ENCODE measurements at regions of chr16 and their contacts with region 1.

Region 1: DNA sequence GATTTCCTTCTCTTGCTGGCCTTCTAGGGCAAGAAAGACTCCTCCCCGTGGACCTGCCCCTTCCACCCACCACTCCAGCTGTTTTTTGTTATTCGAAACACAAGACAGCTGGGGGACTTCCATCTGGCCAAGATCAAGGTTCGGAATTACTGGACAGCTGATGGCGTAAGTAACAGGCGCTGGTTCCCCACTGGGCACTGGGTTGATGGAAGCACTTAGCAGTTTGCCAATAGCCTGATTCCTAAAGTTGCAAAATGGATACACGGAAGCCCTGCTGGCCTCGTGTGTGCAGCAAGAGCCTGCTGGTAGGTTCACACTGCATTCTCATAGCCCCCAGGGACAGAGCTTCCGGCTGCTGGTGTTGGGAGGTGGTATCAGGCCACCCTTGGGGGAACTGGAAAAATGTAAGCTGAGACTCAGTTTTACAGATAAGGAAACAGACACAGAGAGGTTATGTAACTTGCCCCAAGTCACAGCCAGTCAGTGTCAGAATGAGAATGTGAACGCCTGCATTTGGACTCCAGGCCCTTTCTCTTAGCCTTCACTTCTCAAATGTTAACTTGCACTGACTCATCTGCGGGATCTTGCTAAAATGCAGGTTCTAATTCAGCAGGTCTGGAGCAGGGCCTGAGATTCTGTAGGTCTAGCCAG is 171.7 kb downstream of the KATNIP start:
- DNase-seq: peak in 2 of 10 donors; percentile 18 to 82

Region 2: GRCh38 chr16:27779641-27780164 is 58.0 kb after region 1 on chr16:
- intact Hi-C with region 1: loop called (anchors 5 kb)
- DNase-seq: peak in 8 of 10 donors; percentile 63 to 95 (median 76)

Region 3: GRCh38 chr16:27811881-27812280 is 90.2 kb after region 1 on chr16:
- intact Hi-C with region 1: no loop called
- DNase-seq: peak in 2 of 10 donors; percentile 1 to 64

Region 4: DNA sequence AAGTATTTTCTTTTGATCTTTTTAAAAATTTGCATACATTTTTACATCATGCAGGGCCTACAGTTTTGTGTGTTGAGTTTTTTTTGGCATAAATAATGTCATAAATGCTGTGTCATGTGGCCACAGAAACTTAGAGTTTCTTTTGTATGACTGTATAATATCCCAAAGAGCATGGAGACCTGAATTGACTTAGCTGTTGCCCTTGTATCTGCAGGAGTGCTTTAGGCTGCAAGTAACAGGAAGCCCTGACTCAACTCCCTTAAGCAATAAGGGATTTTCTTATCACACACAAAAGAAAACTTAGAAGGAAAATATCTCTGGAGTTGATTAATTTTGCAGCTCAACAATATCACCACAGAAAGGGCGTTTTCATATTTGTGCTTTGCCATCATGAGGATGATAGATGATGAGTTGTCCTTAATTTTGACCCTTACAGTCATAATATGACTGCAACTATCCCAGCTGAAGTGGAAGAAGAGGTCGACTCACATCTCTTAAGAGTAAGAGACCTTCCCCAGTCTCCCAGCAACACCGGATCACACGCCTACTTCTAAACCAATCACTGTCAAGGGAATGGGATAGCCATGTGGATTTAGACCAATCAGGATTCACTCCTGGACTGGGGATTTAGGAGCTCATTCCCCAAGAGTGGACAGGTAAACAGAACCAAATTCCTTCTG is 202.9 kb after region 1 on chr16:
- intact Hi-C with region 1: no loop called
- DNase-seq: peak in 1 of 10 donors; percentile 8